B cell (primary cell): ENCODE measurements at regions of chrX and their contacts with region 1.

Region 1: DNA sequence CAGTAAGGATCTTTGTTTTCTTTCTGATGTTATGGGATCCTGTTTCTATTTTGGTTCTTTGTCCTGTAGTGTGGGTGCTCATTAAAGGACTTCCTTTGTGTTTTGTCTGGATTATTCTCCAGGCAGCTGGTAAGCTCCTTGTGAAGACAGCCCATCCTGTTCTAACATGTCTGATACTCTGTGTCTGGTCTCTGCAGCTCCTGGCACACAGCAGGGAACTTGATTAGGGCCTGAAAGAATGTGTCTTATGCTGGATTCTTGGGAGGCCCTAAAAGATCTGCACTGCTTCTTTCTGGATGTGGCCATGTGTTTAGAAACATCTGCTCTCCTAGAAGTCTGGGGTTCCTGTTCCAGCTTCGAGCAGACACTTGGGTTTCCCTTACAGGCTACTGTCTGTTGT is 38.1 kb upstream of the ATXN3L start:
- DNase-seq: no peak
- ATAC-seq: no peak
- H3K4me3 ChIP-seq: no peak overlapping the region
- H3K4me3 Mint-ChIP-seq: no peak overlapping the region
- H3K27ac ChIP-seq: no peak overlapping the region
- H3K27ac Mint-ChIP-seq: no peak overlapping the region
- H3K4me1 ChIP-seq: no peaks in the 10 kb centered on the region
- H3K4me1 Mint-ChIP-seq: peaks cover 8% of the 10 kb centered on the region
- H3K27me3 ChIP-seq: no peaks in the 10 kb centered on the region
- H3K27me3 Mint-ChIP-seq: no peaks in the 10 kb centered on the region
- CTCF ChIP-seq: no peak

Region 2: GRCh38 chrX:13428055-13428786 is 70.3 kb after region 1 on chrX:
- CTCF ChIA-PET with region 1: no interaction called
- POLR2A ChIA-PET with region 1: no interaction called
- intact Hi-C with region 1: loop called (anchors 10 kb)
- DNase-seq: peak; percentile 9
- ATAC-seq: no peak
- H3K4me3 ChIP-seq: no peak overlapping the region
- H3K4me3 Mint-ChIP-seq: no peak overlapping the region
- H3K27ac ChIP-seq: peak overlapping the region; percentile 32 to 47
- H3K27ac Mint-ChIP-seq: peak overlapping the region; percentile 65
- H3K4me1 ChIP-seq: peaks cover 15 to 18% of the 10 kb centered on the region in 2 donors
- H3K4me1 Mint-ChIP-seq: peaks cover 18% of the 10 kb centered on the region
- H3K27me3 ChIP-seq: no peaks in the 10 kb centered on the region
- H3K27me3 Mint-ChIP-seq: no peaks in the 10 kb centered on the region
- CTCF ChIP-seq: no peak